ENCODE measurements at regions of chr3 and their contacts with region 1.

Region 1: DNA sequence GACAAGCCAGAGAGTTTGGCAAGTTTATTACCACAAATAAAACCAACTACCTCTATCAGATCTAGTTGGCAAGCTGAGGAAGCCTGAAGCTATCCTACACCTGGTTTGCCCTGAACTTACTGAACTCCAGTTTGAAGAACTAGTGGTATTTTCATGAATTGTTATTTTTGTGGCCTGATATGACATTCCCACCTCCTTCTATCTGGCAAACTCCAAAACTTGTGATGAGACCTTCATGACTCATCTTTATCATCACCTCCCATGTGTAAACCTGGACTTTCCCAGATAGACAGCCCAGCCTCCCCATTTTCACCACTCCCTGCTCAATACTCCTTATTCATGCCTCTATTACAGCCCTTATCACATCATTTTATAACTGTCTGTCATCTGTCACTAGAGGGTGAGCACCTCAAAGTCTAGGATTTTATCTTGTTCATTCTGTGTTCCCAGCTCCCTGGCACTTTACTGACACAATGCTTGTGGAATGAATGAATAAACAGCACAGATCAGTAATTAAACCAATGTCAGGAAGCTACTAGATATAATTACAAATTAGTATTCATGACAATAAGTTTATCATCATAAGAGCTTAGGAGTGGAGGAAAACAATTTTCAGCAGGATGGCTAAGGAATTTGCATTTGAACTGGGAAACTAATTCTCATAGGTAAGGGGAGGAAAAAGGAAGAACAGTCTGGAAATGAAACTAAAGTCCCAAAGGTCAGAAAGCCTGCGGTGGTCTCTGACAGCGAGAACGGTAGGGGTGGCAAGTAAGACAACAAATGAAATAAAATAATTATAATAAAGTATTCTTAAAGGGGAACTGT is 13.2 kb upstream of the TRANK1 start:
- DNase-seq: peak; percentile 18
- H3K4me3 Mint-ChIP-seq: no peak overlapping the region
- H3K27ac Mint-ChIP-seq: no peak overlapping the region
- H3K4me1 Mint-ChIP-seq: peaks cover 17% of the 10 kb centered on the region
- H3K27me3 Mint-ChIP-seq: no peaks in the 10 kb centered on the region

Region 2: GRCh38 chr3:35965908-35966307 is 992.2 kb before region 1 on chr3:
- CTCF ChIA-PET with region 1: no interaction called
- intact Hi-C with region 1: loop called (anchors 1 kb)
- DNase-seq: no peak
- H3K4me3 Mint-ChIP-seq: no peak overlapping the region
- H3K27ac Mint-ChIP-seq: no peak overlapping the region
- H3K4me1 Mint-ChIP-seq: peaks cover 2% of the 10 kb centered on the region
- H3K27me3 Mint-ChIP-seq: no peaks in the 10 kb centered on the region

Region 3: DNA sequence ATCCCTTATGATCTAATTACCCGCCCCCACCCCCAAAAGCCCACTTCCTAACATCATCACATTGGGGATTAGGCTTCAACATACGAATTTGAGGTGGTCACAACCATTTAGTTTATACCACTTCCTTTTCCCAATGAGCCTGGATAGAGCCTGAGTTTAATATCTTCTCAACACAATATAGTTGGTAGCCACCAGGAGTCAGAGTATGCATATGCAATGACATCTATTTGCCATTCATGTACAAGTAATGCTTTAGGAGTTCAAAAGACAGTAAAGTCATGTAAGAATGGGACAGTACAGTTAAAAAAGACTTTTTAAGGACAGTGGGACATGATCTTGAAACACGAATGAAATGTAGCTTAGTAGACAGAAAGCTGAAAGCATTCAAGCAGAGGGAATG is 366.1 kb before region 1 on chr3:
- CTCF ChIA-PET with region 1: no interaction called
- intact Hi-C with region 1: no loop called
- DNase-seq: no peak
- H3K4me3 Mint-ChIP-seq: no peak overlapping the region
- H3K27ac Mint-ChIP-seq: no peak overlapping the region
- H3K4me1 Mint-ChIP-seq: no peaks in the 10 kb centered on the region
- H3K27me3 Mint-ChIP-seq: peaks cover 3% of the 10 kb centered on the region

Region 4: GRCh38 chr3:36792342-36792741 is 165.7 kb before region 1 on chr3:
- CTCF ChIA-PET with region 1: interaction called, 4 read pairs
- intact Hi-C with region 1: loop called (anchors 1 kb)
- DNase-seq: peak; percentile 30
- H3K4me3 Mint-ChIP-seq: no peak overlapping the region
- H3K27ac Mint-ChIP-seq: no peak overlapping the region
- H3K4me1 Mint-ChIP-seq: no peaks in the 10 kb centered on the region
- H3K27me3 Mint-ChIP-seq: no peaks in the 10 kb centered on the region

Region 5: GRCh38 chr3:36868614-36869436 is 89.2 kb before region 1 on chr3:
- CTCF ChIA-PET with region 1: interaction called, 59 read pairs
- intact Hi-C with region 1: loop called (anchors 1 kb)
- DNase-seq: peak; percentile 69
- H3K4me3 Mint-ChIP-seq: peak overlapping the region; percentile 13
- H3K27ac Mint-ChIP-seq: no peak overlapping the region
- H3K4me1 Mint-ChIP-seq: peaks cover 23% of the 10 kb centered on the region
- H3K27me3 Mint-ChIP-seq: no peaks in the 10 kb centered on the region

Region 6: GRCh38 chr3:36904641-36905040 is 53.4 kb before region 1 on chr3:
- CTCF ChIA-PET with region 1: interaction called, 74 read pairs
- intact Hi-C with region 1: loop called (anchors 1 kb)
- DNase-seq: no peak
- H3K4me3 Mint-ChIP-seq: no peak overlapping the region
- H3K27ac Mint-ChIP-seq: no peak overlapping the region
- H3K4me1 Mint-ChIP-seq: peaks cover 74% of the 10 kb centered on the region
- H3K27me3 Mint-ChIP-seq: no peaks in the 10 kb centered on the region

Region 7: GRCh38 chr3:36969540-36970432 is 11.7 kb after region 1 on chr3:
- CTCF ChIA-PET with region 1: interaction called, 12 read pairs
- intact Hi-C with region 1: no loop called
- DNase-seq: peak; percentile 71
- H3K4me3 Mint-ChIP-seq: no peak overlapping the region
- H3K27ac Mint-ChIP-seq: peak overlapping the region; percentile 47
- H3K4me1 Mint-ChIP-seq: peaks cover 19% of the 10 kb centered on the region
- H3K27me3 Mint-ChIP-seq: no peaks in the 10 kb centered on the region

Measured in activated naive CD4-positive, alpha-beta T cell treated with anti-CD3 and anti-CD28 coated beads for 36 hours (primary cell).